Caco-2 (cell line): ENCODE measurements at regions of chr17 and their contacts with region 1.

Region 1: DNA sequence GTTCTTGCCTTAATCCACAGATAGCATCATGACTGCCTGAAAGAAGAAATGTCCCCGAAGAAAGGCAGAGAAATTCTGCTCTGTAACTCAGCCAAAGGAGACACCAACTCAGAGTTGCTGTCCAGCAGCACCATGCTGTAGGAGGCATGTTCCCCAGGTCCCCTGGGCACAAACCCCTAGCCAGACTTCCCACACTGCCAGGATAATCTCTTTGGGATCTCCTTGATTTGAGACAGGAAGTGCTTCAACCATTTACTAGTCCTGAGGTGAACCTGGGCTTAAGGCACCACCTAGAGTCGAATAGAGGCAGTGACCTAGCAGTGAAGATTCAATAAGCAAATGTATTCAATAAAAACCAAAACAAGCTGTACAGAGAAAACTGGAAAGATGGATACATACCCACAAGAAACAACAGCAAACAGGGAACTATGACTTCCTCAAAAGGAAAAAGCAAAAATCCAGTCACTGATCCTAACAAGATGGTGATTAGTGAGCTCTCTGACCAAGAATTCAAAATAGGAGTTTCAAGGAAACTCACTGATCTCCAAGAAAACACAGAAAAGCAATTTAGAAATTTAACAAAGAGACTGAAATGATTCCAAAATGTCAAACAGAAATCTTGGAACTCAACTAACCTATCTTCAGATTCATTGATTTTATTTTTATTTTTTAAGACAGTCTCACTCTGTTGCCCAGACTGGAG is 5.7 kb downstream of the OR4D2 start:
- DNase-seq: peak in 1 of 2 experiments; percentile 58
- H3K4me3 ChIP-seq: no peak overlapping the region
- H3K4me3 Mint-ChIP-seq: no peak overlapping the region
- H3K27ac Mint-ChIP-seq: no peak overlapping the region
- H3K4me1 ChIP-seq: no peaks in the 10 kb centered on the region
- H3K4me1 Mint-ChIP-seq: no peaks in the 10 kb centered on the region
- H3K27me3 ChIP-seq: no peaks in the 10 kb centered on the region; the same call in 1 of the 2 replicates
- H3K27me3 Mint-ChIP-seq: peaks cover 33% of the 10 kb centered on the region
- CTCF ChIP-seq: peak; percentile 62 to 63

Region 2: DNA sequence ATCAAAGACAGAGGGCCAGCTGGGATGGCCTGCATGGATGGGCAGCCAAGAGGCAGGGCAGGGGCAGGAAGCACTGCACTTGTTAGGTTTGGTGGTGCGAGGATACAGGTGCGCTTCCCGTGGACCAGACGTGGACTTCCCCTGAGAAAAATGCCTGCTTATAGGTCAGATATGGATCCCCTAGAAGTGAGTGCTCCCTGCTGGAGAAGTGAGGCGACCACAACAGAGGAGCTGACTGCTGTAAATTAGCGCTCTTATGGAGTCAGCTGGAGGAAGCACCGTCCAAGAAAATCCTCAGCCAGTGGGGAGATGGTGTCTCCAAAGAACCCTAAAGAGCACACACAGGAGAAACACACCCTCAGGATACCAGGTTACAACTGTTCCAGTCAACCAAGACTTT is 399.7 kb before region 1 on chr17:
- CTCF ChIA-PET with region 1: no interaction called
- POLR2A ChIA-PET with region 1: no interaction called
- intact Hi-C with region 1: no loop called
- DNase-seq: no peak
- H3K4me3 ChIP-seq: no peak overlapping the region
- H3K4me3 Mint-ChIP-seq: no peak overlapping the region
- H3K27ac Mint-ChIP-seq: no peak overlapping the region
- H3K4me1 ChIP-seq: no peaks in the 10 kb centered on the region
- H3K4me1 Mint-ChIP-seq: no peaks in the 10 kb centered on the region
- H3K27me3 ChIP-seq: no peaks in the 10 kb centered on the region; the same call in 1 of the 2 replicates
- H3K27me3 Mint-ChIP-seq: peaks cover 43% of the 10 kb centered on the region
- CTCF ChIP-seq: no peak

Region 3: DNA sequence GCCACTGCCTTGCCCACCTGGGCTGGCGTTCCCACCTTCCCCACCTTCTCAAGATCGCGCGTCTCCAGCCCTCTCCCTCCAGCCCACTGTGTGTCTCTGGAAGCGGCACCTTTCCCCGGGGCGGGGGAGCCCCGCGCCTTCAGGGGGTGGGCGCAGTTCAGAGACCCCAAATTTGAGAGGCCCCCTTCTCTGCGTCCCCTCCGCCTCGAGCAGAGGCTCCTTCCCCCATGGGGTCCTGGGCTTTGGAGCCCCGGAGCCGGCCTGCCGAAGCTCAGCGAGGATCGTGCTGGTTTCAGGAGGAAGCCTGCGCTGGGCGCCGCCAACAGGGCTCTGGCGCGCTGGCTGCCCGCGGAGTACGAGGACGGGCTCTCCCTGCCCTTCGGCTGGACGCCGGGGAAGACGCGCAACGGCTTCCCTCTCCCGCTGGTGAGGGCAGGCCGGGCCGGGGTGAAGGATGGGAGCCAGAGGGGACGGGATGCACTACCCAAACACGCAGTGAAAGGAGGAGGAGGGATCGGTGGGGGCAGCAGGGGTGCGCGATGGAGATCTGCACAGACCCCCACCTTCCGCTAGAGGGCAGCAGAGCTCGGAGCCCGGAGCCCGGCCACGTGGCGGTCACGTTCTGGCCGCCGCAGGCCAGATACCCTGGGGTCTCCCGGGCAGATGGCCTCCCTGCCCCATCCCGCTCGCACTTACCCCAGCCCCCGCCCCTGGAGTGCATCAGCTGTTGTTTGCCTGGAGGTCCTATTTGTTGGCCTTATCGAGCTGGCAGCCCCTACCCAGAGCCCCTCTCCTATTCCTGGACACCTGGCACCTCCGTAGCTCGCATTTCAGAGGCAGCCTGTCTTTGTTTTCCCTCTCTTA is 77.0 kb after region 1 on chr17:
- CTCF ChIA-PET with region 1: no interaction called
- POLR2A ChIA-PET with region 1: interaction called, 13 read pairs
- intact Hi-C with region 1: no loop called
- DNase-seq: peak; percentile 60 to 86
- H3K4me3 ChIP-seq: peak overlapping the region; percentile 37
- H3K4me3 Mint-ChIP-seq: peak overlapping the region; percentile 76
- H3K27ac Mint-ChIP-seq: no peak overlapping the region
- H3K4me1 ChIP-seq: peaks cover 3% of the 10 kb centered on the region
- H3K4me1 Mint-ChIP-seq: peaks cover 12% of the 10 kb centered on the region
- H3K27me3 ChIP-seq: no peaks in the 10 kb centered on the region
- H3K27me3 Mint-ChIP-seq: peaks cover 5% of the 10 kb centered on the region
- CTCF ChIP-seq: peak; percentile 88 to 96